AG04450 (cell line): ENCODE measurements at regions of chr16 and their contacts with region 1.

Region 1: DNA sequence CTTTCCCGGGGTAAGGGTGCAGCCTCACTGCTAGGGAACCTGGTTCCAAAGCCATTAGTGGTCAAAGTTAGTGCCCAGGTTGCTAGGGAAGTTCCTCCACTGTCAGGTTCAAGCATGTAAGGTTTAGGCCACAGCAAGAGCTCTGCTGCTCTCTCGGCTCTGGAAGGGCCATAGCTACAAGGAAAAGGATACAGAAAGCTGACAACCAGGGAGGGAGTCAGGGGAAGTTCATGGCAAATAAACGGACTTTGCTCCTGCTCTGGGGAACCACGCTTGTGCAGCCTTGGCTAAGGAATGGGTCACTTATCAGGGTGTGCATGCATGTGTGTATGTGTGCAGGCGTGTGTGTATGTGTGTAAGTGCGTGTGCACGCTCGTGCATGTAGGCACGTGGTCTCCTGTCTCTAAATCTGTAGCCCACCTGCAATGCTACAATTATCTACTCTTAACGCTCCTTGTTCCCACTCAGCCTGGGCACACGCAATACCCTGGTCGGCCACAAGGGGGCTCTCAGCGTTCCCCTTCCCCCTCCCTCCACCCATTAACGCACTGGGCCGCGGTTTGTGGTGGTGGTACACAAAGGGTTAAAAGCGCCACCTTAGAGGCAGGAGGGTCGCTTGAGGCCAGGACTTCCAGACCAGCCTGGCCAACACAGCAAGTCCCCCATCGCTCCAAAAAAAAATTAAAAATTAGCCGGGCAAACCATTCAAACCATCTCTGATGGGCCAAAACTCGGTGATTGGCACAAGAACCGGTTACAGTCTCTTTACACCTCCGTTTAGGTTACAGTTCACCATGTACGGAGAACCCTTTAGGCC is 48.4 kb upstream of the KDM8 start:
- DNase-seq: no peak
- H3K4me3 ChIP-seq: no peak overlapping the region
- H3K27ac ChIP-seq: no peak overlapping the region
- H3K27me3 ChIP-seq: no peaks in the 10 kb centered on the region
- CTCF ChIP-seq: peak; percentile 99

Region 2: DNA sequence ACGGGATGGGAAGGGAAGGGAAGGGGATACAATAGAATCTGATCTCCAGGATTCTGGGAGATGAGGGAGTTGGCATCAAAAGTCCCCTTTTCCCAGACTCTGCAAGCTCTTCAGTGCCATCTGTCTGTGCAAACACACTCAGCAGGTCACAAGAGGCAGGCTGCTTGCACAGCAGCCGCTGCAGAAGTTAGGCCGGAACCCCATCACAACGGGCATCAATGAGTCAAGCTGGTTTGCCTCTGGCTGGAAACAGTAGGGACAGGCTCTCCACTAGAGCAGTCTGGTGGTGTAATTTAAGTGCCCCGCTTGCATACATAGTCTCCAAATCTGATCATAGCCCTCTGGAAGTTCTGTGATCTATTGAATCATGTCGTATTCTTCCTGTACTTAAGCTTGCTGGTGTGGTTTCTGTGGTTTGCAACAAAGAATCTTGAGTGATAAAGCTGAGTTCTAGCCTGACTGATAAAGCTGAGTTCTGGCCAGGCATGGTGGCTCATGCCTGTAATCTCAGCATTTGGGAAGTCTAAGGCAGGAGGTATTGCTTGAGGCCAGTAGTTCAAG is 14.7 kb after region 1 on chr16:
- CTCF ChIA-PET with region 1: interaction called, 22 read pairs
- POLR2A ChIA-PET with region 1: interaction called, 3 read pairs
- DNase-seq: peak; percentile 53
- H3K4me3 ChIP-seq: no peak overlapping the region
- H3K27ac ChIP-seq: no peak overlapping the region
- H3K27me3 ChIP-seq: no peaks in the 10 kb centered on the region
- CTCF ChIP-seq: peak; percentile 33

Region 3: GRCh38 chr16:27268376-27269299 is 113.7 kb after region 1 on chr16 and contains the start of gene NSMCE1:
- CTCF ChIA-PET with region 1: no interaction called
- POLR2A ChIA-PET with region 1: no interaction called
- DNase-seq: peak; percentile 87
- H3K4me3 ChIP-seq: peak within 1 kb of the TSS; percentile 86
- H3K27ac ChIP-seq: peak within 1 kb of the TSS; percentile 70
- H3K27me3 ChIP-seq: no peaks in the 10 kb centered on the region
- CTCF ChIP-seq: peak; percentile 26; the same call in 1 of the 2 replicates
- polyA plus RNA-seq, gene NSMCE1: 35.4 and 37.2 TPM in 2 replicates

Region 4: DNA sequence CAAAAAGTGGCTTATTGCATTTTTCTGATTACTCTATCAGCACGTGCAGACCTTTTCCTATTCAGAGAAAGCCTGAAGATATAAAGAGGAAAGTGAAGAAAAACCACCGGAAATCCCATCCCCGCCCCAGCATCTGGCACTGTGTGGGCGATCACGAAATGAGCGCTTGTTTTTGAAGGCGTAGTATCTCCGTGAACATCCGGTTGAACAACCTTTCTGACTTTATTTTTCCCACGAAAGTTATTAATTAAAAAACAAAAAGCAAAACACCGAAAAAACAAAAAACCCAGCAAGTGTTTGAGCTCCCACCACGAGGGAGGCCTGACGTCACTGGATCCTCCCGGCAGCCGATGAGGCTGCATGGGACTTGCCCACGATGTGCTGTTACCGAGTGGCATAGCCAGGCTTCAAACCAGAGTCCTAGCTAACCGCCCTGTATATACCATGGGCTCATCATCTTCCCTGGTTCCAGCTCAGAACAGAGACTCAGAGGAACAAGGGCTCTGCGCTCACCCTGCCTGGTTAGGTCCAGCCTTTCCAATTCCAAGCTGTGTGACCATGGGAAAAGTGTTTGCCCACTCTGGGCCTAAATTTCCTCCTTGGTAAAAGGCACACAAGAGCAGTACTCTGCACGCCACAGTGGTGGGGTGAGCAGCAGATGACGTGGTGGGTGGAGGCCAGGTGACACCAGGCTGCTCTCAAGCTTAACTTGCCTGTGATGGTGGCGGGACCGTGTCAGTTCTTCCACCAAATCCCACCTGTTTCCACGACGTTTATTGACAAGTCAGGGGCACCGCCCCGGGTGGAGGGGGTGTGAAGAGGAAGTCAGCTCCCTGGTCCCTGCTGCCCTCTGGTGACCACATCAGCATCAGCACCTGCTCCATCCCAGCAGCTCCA is 212.8 kb after region 1 on chr16:
- CTCF ChIA-PET with region 1: interaction called, 64 read pairs
- POLR2A ChIA-PET with region 1: no interaction called
- DNase-seq: peak; percentile 20
- H3K4me3 ChIP-seq: no peak overlapping the region
- H3K27ac ChIP-seq: peak overlapping the region; percentile 11
- H3K27me3 ChIP-seq: peaks cover 3% of the 10 kb centered on the region
- CTCF ChIP-seq: peak; percentile 81

Region 5: GRCh38 chr16:27374804-27375425 is 220.0 kb after region 1 on chr16:
- CTCF ChIA-PET with region 1: interaction called, 64 read pairs
- POLR2A ChIA-PET with region 1: no interaction called
- DNase-seq: peak; percentile 55
- H3K4me3 ChIP-seq: no peak overlapping the region
- H3K27ac ChIP-seq: peak overlapping the region; percentile 31
- H3K27me3 ChIP-seq: peaks cover 8% of the 10 kb centered on the region
- CTCF ChIP-seq: peak; percentile 66

Region 6: GRCh38 chr16:27455700-27456099 is 300.8 kb after region 1 on chr16:
- CTCF ChIA-PET with region 1: interaction called, 12 read pairs
- POLR2A ChIA-PET with region 1: no interaction called
- DNase-seq: no peak
- H3K4me3 ChIP-seq: no peak overlapping the region
- H3K27ac ChIP-seq: no peak overlapping the region
- H3K27me3 ChIP-seq: no peaks in the 10 kb centered on the region
- CTCF ChIP-seq: no peak